ENCODE measurements at regions of chr1 and their contacts with region 1.

Region 1: DNA sequence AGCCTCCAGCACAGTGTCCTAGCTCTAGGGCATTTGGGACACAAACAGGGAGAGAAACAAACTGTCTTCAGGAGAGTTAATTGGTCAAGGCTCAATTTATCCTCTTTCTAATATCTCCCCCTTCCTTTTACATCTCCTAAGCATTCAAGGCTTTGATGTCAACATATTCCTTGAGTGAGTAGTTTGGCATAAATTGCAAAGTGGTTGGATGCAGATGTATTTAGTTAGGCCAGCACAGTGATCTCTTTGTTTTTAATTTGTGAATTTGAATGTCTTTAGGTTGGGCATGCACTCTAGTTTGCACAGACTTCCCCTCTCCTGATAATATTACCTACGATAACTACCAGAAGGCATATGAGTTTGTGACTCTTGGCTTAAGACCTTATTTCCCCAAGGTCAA is 12.5 kb upstream of the OLFML2B start:
- DNase-seq: no peak
- ATAC-seq: no peak

Region 2: GRCh38 chr1:161792740-161793139 is 243.4 kb before region 1 on chr1:
- intact Hi-C with region 1: loop called (anchors 2 kb)
- DNase-seq: no peak
- ATAC-seq: peak; percentile 68

Measured in Right ventricle myocardium superior (tissue), 1 donor.